ENCODE measurements at regions of chr11 and their contacts with region 1.

Region 1: DNA sequence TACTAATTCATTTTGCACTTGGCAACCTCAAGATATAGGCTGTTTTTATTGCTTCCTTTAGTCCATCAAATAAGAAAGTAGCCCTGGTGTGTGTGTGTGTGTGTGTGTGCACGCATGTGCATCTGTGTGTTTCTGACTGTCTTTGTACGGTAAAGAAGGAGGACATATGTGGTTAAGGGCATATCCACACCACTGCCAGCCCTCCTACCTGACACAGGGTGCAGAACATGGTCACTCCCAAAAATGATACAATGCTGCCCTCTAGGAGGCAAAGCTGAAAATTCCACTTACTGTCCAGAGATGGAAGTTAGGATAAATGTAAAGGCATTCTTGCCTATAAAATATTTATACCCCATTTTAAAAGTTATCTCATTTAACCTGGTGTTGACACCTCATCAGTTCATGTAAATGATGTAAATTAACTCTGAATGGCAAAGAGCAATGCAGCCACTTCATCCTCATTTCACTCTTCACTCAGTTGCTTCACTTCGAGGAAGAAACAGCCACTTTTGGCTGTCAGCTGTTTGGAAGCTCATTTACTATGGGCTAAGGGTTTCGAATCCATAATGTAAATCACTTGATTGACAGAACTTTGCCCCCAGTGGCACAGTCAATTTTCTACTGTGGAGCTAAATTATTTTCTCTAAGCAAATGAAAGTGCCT is 83.1 kb upstream of the MTNR1B start:
- DNase-seq: peak; percentile 55
- H3K4me3 ChIP-seq: no peak overlapping the region
- H3K27ac ChIP-seq: no peak overlapping the region
- H3K4me1 ChIP-seq: no peaks in the 10 kb centered on the region
- H3K27me3 ChIP-seq: no peaks in the 10 kb centered on the region
- CTCF ChIP-seq: peak; percentile 79 to 83

Region 2: GRCh38 chr11:92070026-92070889 is 816.1 kb before region 1 on chr11:
- CTCF ChIA-PET with region 1: no interaction called
- dilution Hi-C with region 1: no loop called
- in situ Hi-C with region 1: no loop called
- intact Hi-C with region 1: loop called (anchors 2 kb)
- DNase-seq: peak; percentile 1
- H3K4me3 ChIP-seq: no peak overlapping the region
- H3K27ac ChIP-seq: no peak overlapping the region
- H3K4me1 ChIP-seq: no peaks in the 10 kb centered on the region
- H3K27me3 ChIP-seq: no peaks in the 10 kb centered on the region
- CTCF ChIP-seq: peak in 1 of 2 donors; percentile 26

Region 3: GRCh38 chr11:92211576-92212167 is 674.7 kb before region 1 on chr11:
- CTCF ChIA-PET with region 1: no interaction called
- dilution Hi-C with region 1: no loop called
- in situ Hi-C with region 1: no loop called
- intact Hi-C with region 1: loop called (anchors 1 kb)
- DNase-seq: peak; percentile 21
- H3K4me3 ChIP-seq: no peak overlapping the region
- H3K27ac ChIP-seq: no peak overlapping the region
- H3K4me1 ChIP-seq: no peaks in the 10 kb centered on the region
- H3K27me3 ChIP-seq: peaks cover 2% of the 10 kb centered on the region
- CTCF ChIP-seq: peak in 1 of 2 donors; percentile 37

Region 4: GRCh38 chr11:92340839-92341238 is 545.5 kb before region 1 on chr11:
- CTCF ChIA-PET with region 1: no interaction called
- dilution Hi-C with region 1: no loop called
- in situ Hi-C with region 1: no loop called
- intact Hi-C with region 1: loop called (anchors 2 kb)
- DNase-seq: peak; percentile 20
- H3K4me3 ChIP-seq: no peak overlapping the region
- H3K27ac ChIP-seq: no peak overlapping the region
- H3K4me1 ChIP-seq: no peaks in the 10 kb centered on the region
- H3K27me3 ChIP-seq: no peaks in the 10 kb centered on the region
- CTCF ChIP-seq: peak; percentile 63 to 78

Region 5: GRCh38 chr11:92399705-92400104 is 486.7 kb before region 1 on chr11:
- CTCF ChIA-PET with region 1: no interaction called
- dilution Hi-C with region 1: no loop called
- in situ Hi-C with region 1: no loop called
- intact Hi-C with region 1: loop called (anchors 5 kb)
- DNase-seq: no peak
- H3K4me3 ChIP-seq: no peak overlapping the region
- H3K27ac ChIP-seq: no peak overlapping the region
- H3K4me1 ChIP-seq: no peaks in the 10 kb centered on the region
- H3K27me3 ChIP-seq: no peaks in the 10 kb centered on the region
- CTCF ChIP-seq: peak in 1 of 2 donors; percentile 22

Region 6: GRCh38 chr11:92545906-92546471 is 340.4 kb before region 1 on chr11:
- CTCF ChIA-PET with region 1: no interaction called
- dilution Hi-C with region 1: no loop called
- in situ Hi-C with region 1: no loop called
- intact Hi-C with region 1: loop called (anchors 5 kb)
- DNase-seq: no peak
- H3K4me3 ChIP-seq: no peak overlapping the region
- H3K27ac ChIP-seq: no peak overlapping the region
- H3K4me1 ChIP-seq: no peaks in the 10 kb centered on the region
- H3K27me3 ChIP-seq: peaks cover 6% of the 10 kb centered on the region
- CTCF ChIP-seq: no peak

Region 7: DNA sequence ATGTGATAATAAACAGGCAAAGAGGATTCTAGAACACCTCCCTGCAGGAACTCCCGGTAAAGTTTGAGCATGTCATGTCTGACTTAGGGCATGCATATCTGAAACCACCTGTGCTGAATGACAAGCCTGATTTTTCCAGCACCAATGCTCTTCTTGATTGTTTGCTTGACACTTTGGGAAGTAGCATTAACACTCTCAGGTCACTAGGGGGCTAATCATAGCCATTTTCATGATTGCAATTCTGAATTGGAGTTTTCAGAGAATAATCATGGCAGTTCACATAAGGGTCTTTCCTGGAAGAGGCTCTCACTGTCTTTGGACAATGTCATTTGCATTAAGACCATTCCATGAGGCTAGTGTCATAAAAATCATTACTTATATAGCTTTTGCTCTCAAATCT is 151.3 kb before region 1 on chr11:
- CTCF ChIA-PET with region 1: no interaction called
- dilution Hi-C with region 1: no loop called
- in situ Hi-C with region 1: no loop called
- intact Hi-C with region 1: loop called (anchors 1 kb)
- DNase-seq: no peak
- H3K4me3 ChIP-seq: no peak overlapping the region
- H3K27ac ChIP-seq: no peak overlapping the region
- H3K4me1 ChIP-seq: no peaks in the 10 kb centered on the region
- H3K27me3 ChIP-seq: peaks cover 8% of the 10 kb centered on the region
- CTCF ChIP-seq: peak; percentile 55 to 65

Region 8: GRCh38 chr11:92955860-92956259 is 69.5 kb after region 1 on chr11:
- CTCF ChIA-PET with region 1: no interaction called
- dilution Hi-C with region 1: no loop called
- in situ Hi-C with region 1: no loop called
- intact Hi-C with region 1: no loop called
- DNase-seq: peak; percentile 94
- H3K4me3 ChIP-seq: no peak overlapping the region
- H3K27ac ChIP-seq: peak overlapping the region; percentile 44
- H3K4me1 ChIP-seq: peaks cover 16% of the 10 kb centered on the region
- H3K27me3 ChIP-seq: no peaks in the 10 kb centered on the region
- CTCF ChIP-seq: no peak

Region 9: GRCh38 chr11:93089474-93090102 is 203.2 kb after region 1 on chr11:
- CTCF ChIA-PET with region 1: no interaction called
- dilution Hi-C with region 1: no loop called
- in situ Hi-C with region 1: no loop called
- intact Hi-C with region 1: no loop called
- DNase-seq: peak; percentile 63
- H3K4me3 ChIP-seq: no peak overlapping the region
- H3K27ac ChIP-seq: no peak overlapping the region
- H3K4me1 ChIP-seq: peaks cover 9% of the 10 kb centered on the region
- H3K27me3 ChIP-seq: no peaks in the 10 kb centered on the region
- CTCF ChIP-seq: peak; percentile 35 to 62

Measured in mammary epithelial cell (primary cell).